Activated T-helper 1 cell treated with anti-CD3 and anti-CD28 coated beads, Interleukin-12 subunit alpha, Interleukin-12 subunit beta, Interleukin-2, Interleukin-4 antibody, amounts not matched to agents 30 ng/mL and 10 ng/mL and 1 ng/mL, durations not matched to agents 14 hours and 24 hours and 36 hours (primary cell): ENCODE measurements at regions of chr13 and their contacts with region 1.

Region 1: DNA sequence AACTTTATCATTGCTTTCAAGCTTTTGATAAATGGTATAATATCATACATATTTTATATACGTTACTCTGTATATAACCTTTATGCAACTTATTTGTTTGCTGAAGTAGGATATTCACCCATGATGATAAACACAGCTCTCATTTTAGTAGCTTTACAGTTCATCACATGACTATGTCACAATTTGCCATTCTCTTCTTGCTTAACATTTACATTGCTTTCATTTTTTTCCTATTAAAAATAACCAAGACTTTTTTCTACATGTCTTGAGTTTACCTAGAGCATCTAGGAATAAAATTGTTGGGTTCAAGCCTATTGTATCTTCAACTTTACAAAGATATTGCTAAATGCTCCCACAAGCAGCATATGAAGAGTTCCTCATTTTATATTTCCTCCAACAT is 54.0 kb downstream of the KCNRG start:
- DNase-seq: no peak
- H3K4me3 Mint-ChIP-seq: no peak overlapping the region
- H3K27ac Mint-ChIP-seq: no peak overlapping the region
- H3K4me1 Mint-ChIP-seq: peaks cover 63% of the 10 kb centered on the region
- H3K27me3 Mint-ChIP-seq: no peaks in the 10 kb centered on the region

Region 2: DNA sequence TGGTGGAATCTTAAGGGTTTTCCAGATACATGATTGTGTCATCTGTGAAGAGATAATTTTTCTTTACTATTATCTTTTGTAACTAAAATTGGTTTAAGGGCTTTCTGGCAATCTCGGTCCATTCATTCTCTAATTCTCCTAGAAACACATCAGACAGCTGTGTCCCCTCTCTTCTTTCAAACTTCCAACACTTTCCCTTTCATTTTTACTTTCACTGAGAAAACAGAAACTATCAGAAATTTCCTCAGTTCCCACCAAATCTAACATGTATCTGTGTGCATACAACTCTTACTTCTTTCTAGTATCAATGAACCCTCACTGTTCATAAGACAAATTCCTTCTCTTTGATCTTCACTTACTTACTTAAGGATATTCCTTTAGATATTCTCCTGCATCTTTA is 13.8 kb before region 1 on chr13:
- intact Hi-C with region 1: loop called (anchors 2 kb)
- DNase-seq: no peak
- H3K4me3 Mint-ChIP-seq: no peak overlapping the region
- H3K27ac Mint-ChIP-seq: no peak overlapping the region
- H3K4me1 Mint-ChIP-seq: peaks cover 60% of the 10 kb centered on the region
- H3K27me3 Mint-ChIP-seq: no peaks in the 10 kb centered on the region

Region 3: DNA sequence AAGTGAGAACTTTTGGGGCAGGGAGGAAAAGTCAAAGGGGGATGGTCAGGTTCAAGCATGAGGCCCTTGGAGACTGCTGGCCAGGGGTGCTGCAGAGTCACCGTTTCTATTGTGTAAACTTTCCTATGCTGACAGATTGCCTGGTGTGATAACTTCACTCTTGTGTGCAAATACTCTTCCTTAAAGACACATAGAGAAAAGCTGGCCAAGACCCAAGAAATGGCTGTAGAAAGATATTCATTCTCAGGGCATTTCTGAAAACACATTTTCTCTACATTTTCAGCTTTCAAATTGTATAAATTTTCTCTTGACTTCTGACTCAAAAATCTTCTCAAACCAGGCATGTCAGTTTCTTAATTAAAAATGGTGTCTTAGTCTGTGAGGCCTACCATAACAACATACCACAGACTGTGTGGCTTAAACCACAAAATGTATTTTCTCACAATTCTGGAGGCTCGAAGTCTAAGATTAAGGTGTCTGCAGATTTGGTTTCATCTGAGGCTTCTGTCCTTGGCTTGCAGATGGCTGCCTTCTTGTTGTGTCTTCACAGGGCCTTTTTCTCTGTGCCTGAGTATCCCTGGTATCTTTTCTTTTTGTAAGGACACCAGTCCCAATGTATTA is 250.5 kb after region 1 on chr13:
- intact Hi-C with region 1: no loop called
- DNase-seq: no peak
- H3K4me3 Mint-ChIP-seq: no peak overlapping the region
- H3K27ac Mint-ChIP-seq: no peak overlapping the region
- H3K4me1 Mint-ChIP-seq: peaks cover 22% of the 10 kb centered on the region
- H3K27me3 Mint-ChIP-seq: peaks cover 9% of the 10 kb centered on the region